PC-9 (cell line): ENCODE measurements at regions of chr22 and their contacts with region 1.

Region 1: GRCh38 chr22:41946629-41947423 is at the start of gene CENPM:
- DNase-seq: peak; percentile 92 to 95
- H3K4me3 ChIP-seq: peak within 1 kb of the TSS; percentile 73
- H3K27ac ChIP-seq: no peak within 1 kb of the TSS
- H3K4me1 ChIP-seq: peaks cover 18% of the 10 kb centered on the region
- H3K27me3 ChIP-seq: no peaks in the 10 kb centered on the region
- CTCF ChIP-seq: no peak
- total RNA-seq, gene CENPM: 42.0 and 53.8 TPM in 2 replicates

Region 2: GRCh38 chr22:41780746-41781505 is 165.9 kb before region 1 on chr22:
- CTCF ChIA-PET with region 1: no interaction called
- POLR2A ChIA-PET with region 1: no interaction called
- intact Hi-C with region 1: no loop called
- DNase-seq: no peak
- H3K4me3 ChIP-seq: no peak overlapping the region
- H3K27ac ChIP-seq: no peak overlapping the region
- H3K4me1 ChIP-seq: peaks cover 7% of the 10 kb centered on the region
- H3K27me3 ChIP-seq: no peaks in the 10 kb centered on the region
- CTCF ChIP-seq: no peak

Region 3: GRCh38 chr22:42039271-42039670 is 92.4 kb after region 1 on chr22:
- CTCF ChIA-PET with region 1: no interaction called
- POLR2A ChIA-PET with region 1: no interaction called
- intact Hi-C with region 1: no loop called
- DNase-seq: no peak
- H3K4me3 ChIP-seq: no peak overlapping the region
- H3K27ac ChIP-seq: no peak overlapping the region
- H3K4me1 ChIP-seq: no peaks in the 10 kb centered on the region
- H3K27me3 ChIP-seq: no peaks in the 10 kb centered on the region
- CTCF ChIP-seq: no peak

Region 4: DNA sequence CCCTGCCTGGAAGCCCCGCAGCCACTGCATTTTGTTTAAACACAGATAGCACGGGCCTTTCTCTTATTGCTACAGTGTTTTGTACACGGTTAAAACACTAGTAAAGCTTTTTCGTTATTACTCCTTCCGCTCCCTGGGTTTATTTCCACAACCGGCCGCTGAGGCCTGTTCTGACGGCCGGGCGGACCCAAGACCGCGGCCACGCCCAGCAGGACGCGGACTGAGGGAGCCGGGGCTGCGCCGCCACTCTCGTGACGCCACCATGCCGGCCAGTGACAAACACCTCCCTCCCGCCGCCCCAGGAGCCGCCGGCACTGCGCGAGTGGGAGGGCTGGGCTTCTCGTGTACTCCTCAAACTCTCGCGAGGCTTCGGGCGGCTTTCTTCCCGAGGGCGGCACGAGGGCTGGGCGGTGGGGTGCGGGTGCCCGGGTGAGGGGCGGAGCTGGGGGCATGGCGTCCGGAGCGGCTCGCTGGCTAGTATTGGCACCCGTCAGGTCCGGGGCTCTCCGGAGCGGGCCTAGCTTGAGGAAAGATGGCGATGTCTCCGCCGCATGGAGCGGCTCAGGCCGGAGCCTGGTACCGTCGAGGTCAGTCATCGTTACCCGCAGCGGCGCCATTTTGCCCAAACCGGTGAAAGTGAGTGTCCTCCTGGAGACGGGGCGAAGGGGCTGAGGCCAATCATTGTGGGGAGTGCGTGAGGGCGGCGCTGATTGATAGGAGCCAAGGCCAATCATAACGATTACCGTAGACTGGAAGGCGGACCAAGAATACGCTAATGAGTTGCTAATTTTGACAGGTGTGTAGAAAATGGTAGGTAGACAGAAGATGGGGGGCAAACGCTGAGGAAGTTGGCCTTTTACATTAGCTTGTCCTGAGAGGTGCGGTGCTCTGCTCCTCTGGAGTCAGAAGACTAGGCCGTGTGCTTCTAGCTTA is 132.8 kb after region 1 on chr22 and contains the start of gene SMDT1:
- CTCF ChIA-PET with region 1: no interaction called
- POLR2A ChIA-PET with region 1: interaction called, 5 read pairs
- intact Hi-C with region 1: loop called (anchors 10 kb)
- DNase-seq: peak; percentile 95 to 98
- H3K4me3 ChIP-seq: peak within 1 kb of the TSS; percentile 85
- H3K27ac ChIP-seq: peak within 1 kb of the TSS; percentile 81
- H3K4me1 ChIP-seq: peaks cover 14% of the 10 kb centered on the region
- H3K27me3 ChIP-seq: no peaks in the 10 kb centered on the region
- CTCF ChIP-seq: no peak
- total RNA-seq, gene SMDT1: 55.3 and 72.8 TPM in 2 replicates

Region 5: GRCh38 chr22:42353883-42354727 is 407.3 kb after region 1 on chr22:
- CTCF ChIA-PET with region 1: no interaction called
- POLR2A ChIA-PET with region 1: no interaction called
- intact Hi-C with region 1: no loop called
- DNase-seq: no peak
- H3K4me3 ChIP-seq: no peak overlapping the region
- H3K27ac ChIP-seq: no peak overlapping the region
- H3K4me1 ChIP-seq: 0 out of 2 replicates have a peak, but pooled peaks cover 9% of the 10 kb centered on the region
- H3K27me3 ChIP-seq: no peaks in the 10 kb centered on the region
- CTCF ChIP-seq: no peak